ENCODE measurements at regions of chr7 and their contacts with region 1.

Region 1: DNA sequence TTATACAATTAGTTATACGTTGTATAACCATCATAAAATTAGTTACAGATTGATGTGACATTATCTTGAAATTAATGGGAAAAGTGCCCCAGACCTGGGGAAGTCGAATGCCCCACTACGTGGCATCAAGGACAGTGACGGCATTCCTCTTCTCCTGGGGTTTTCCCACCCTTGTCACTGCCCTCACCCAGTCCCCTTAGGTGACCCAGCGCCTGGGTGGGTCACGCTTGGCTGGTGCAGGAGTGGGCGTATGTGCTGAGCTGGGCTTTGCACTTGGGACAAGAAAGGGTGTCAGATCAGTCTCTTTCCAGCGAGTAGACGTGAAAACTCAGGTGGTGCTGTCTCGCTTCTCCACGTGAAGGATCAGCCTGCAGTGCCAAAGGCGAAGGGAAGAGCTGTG is 7.6 kb downstream of the FOXK1 start:
- DNase-seq: peak in 1 of 2 donors; percentile 26
- ATAC-seq: no peak
- H3K4me3 ChIP-seq: no peak overlapping the region
- H3K27ac ChIP-seq: no peak overlapping the region
- H3K4me1 ChIP-seq: no peaks in the 10 kb centered on the region
- H3K27me3 ChIP-seq: no peaks in the 10 kb centered on the region

Region 2: GRCh38 chr7:4641667-4642467 is 47.8 kb before region 1 on chr7:
- intact Hi-C with region 1: no loop called
- DNase-seq: peak; percentile 97 to 99
- ATAC-seq: peak; percentile 97
- H3K4me3 ChIP-seq: peak overlapping the region; percentile 37 to 55
- H3K27ac ChIP-seq: peak overlapping the region in 1 of 2 donors; percentile 46
- H3K4me1 ChIP-seq: no peaks in the 10 kb centered on the region
- H3K27me3 ChIP-seq: no peaks in the 10 kb centered on the region

Region 3: GRCh38 chr7:4725014-4725849 is 35.6 kb after region 1 on chr7:
- intact Hi-C with region 1: loop called (anchors 5 kb)
- DNase-seq: peak; percentile 92 to 93
- ATAC-seq: peak; percentile 88
- H3K4me3 ChIP-seq: peak overlapping the region; percentile 12 to 44
- H3K27ac ChIP-seq: peak overlapping the region; percentile 12 to 76
- H3K4me1 ChIP-seq: no peaks in the 10 kb centered on the region
- H3K27me3 ChIP-seq: no peaks in the 10 kb centered on the region